Natural killer cell (primary cell): ENCODE measurements at regions of chr16 and their contacts with region 1.

Region 1: GRCh38 chr16:83898463-83899271 is at the start of gene MLYCD:
- DNase-seq: peak; percentile 72 to 85
- ATAC-seq: peak; percentile 93 to 96 (median 93)
- H3K4me3 ChIP-seq: peak within 1 kb of the TSS; percentile 57
- H3K4me3 Mint-ChIP-seq: peak within 1 kb of the TSS; percentile 96
- H3K27ac ChIP-seq: peak within 1 kb of the TSS; percentile 70
- H3K27ac Mint-ChIP-seq: peak within 1 kb of the TSS; percentile 85 to 89
- H3K4me1 ChIP-seq: peaks cover 14% of the 10 kb centered on the region
- H3K4me1 Mint-ChIP-seq: peaks cover 42 to 45% of the 10 kb centered on the region in 2 donors
- H3K27me3 ChIP-seq: no peaks in the 10 kb centered on the region
- H3K27me3 Mint-ChIP-seq: peaks cover 0 to 5% of the 10 kb centered on the region in 2 donors
- CTCF ChIP-seq: no peak
- total RNA-seq, gene MLYCD: 8.5 to 13.2 (median 11.9) TPM

Region 2: DNA sequence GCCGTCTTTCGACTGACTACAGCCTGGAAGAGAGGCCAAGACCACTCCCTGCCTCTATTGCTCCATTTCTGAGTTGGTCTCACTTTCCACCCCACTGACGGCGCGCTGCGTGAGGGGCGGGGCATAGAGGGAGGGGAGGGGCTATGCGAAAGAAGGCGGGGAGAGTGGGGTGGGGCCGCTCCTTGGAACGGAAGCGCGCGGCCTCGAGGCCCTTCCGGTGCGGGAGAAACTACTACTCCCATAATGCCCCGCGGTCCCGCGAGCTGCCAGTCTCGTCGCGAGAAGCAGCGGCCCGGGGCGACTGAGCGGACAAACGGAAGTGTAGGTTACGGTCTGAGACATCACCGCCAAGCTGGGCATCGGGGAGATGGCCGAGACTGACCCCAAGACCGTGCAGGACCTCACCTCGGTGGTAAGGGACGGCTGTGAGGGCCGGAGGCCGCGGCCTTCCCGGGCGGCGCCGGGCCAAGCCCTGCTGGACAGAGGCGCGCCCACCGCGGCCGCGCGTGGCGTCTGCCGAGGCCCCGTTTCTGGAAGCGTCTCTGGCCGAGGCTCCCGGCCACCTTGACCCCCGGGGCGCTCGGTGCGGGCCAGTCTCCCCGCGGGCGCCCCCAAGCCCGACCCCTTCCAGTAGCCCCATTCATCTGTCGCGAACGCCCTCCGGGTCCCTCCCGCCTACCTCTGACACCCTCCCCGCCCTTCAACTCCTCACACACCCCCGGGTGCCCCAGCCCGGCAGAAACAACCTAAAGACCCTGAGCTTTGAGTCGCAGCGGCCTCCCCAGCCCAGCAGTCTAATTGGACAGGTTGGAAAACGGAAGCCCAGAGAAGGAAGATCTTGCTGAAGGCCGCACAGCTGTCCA is 90.7 kb before region 1 on chr16 and contains the start of gene HSBP1:
- intact Hi-C with region 1: loop called (anchors 5 kb)
- DNase-seq: peak; percentile 82 to 95
- ATAC-seq: peak; percentile 97 to 100 (median 98)
- H3K4me3 ChIP-seq: peak within 1 kb of the TSS; percentile 71
- H3K4me3 Mint-ChIP-seq: peak within 1 kb of the TSS; percentile 98
- H3K27ac ChIP-seq: peak within 1 kb of the TSS; percentile 77
- H3K27ac Mint-ChIP-seq: peak within 1 kb of the TSS; percentile 80 to 92
- H3K4me1 ChIP-seq: peaks cover 31% of the 10 kb centered on the region
- H3K4me1 Mint-ChIP-seq: peaks cover 24 to 26% of the 10 kb centered on the region in 2 donors
- H3K27me3 ChIP-seq: no peaks in the 10 kb centered on the region
- H3K27me3 Mint-ChIP-seq: peaks cover 3 to 4% of the 10 kb centered on the region in 2 donors
- CTCF ChIP-seq: no peak
- total RNA-seq, gene HSBP1: 34.8 to 39.6 (median 37.8) TPM